ENCODE measurements at regions of chr9 and their contacts with region 1.

Region 1: GRCh38 chr9:89154651-89155336 is 23.8 kb downstream of the SHC3 start:
- DNase-seq: peak; percentile 85
- H3K4me3 ChIP-seq: no peak overlapping the region
- H3K27ac ChIP-seq: peak overlapping the region; percentile 96
- H3K4me1 ChIP-seq: peaks cover 24% of the 10 kb centered on the region
- H3K27me3 ChIP-seq: no peaks in the 10 kb centered on the region
- CTCF ChIP-seq: no peak
- POLR2A ChIP-seq: no peak

Region 2: DNA sequence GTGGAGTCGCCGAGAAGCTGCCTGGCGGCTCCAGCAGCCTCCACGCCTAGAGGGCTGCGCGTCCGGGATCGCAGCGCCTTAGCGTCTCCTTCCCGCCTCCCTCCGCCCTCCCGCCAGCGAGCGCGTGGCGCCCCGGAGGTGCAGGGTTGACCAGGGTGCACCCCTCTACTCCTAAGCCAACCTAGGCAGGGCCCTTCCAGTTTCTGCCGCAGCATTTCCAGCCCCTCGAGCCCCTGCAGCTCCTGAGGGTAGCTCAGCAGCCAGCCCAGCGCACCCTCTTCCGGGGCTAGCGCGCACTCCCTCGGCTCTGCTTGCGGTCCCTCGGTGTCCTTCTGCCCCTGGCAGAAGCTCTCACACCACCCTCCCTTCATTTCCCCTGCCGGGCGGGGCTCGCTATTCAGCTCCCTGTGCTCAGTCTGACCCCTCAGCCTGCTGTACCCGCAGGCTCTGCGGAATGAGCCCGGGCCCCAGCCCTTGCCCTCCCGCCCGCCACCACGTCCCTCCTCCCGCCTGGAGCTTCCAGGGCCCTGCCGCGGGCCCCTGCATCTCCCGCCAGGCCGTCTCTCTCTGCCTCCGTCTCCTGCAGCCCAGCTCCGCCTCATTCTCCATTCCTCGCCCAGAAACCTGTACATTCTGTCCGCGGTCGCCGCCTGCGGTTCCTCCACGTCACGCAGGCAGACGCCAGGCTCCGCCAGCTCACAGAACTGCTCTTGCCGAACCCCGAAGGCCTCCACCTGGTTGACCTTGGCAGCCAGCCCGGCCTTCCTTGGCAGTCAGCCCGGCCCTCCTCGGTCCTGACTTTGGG is 1078.3 kb before region 1 on chr9:
- CTCF ChIA-PET with region 1: no interaction called
- POLR2A ChIA-PET with region 1: no interaction called
- dilution Hi-C with region 1: no loop called
- intact Hi-C with region 1: loop called (anchors 5 kb)
- DNase-seq: peak; percentile 10
- H3K4me3 ChIP-seq: peak overlapping the region in 1 of 3 experiments; percentile 27
- H3K27ac ChIP-seq: no peak overlapping the region
- H3K4me1 ChIP-seq: peaks cover 3% of the 10 kb centered on the region
- H3K27me3 ChIP-seq: peaks cover 6 to 10% of the 10 kb centered on the region in 2 experiments
- CTCF ChIP-seq: peak in 1 of 2 donors; percentile 4
- POLR2A ChIP-seq: no peak

Region 3: DNA sequence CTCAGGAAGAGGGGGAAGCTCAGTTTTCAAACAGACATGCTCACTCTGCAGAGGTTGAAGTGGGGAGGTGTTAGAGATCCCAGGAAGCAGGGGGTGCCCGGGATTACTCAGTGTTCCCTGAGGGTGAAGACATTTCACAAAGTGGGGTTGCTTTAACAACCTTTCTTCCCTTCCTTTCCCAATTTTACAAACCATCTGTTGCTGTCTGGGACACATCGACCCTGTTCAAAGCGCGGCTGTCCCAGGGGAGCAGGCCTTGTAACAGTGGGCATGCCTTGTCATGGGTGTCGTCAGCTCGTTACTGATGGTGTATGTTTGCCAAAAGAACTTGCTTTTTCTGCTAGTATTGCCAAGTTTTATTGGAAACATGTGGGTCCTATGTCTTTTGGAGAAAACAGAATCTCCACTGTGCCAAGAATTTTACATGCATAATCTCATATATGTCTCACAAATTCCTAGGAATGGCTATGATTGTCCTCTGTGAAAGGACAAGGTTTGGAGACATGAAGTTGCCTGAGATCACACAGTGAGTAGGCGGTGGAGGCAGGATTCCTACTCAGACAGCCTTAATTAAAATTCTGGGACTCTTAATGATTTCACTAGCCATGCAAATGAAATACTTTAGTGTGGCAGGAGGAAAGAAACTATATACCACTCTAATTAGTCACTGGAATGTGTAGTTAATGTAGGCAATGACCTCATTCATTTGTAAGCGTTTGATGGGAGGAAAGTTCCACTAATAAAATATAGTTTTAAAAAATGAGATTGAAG is 421.0 kb before region 1 on chr9:
- CTCF ChIA-PET with region 1: no interaction called
- POLR2A ChIA-PET with region 1: no interaction called
- dilution Hi-C with region 1: no loop called
- intact Hi-C with region 1: loop called (anchors 10 kb)
- DNase-seq: peak; percentile 57
- H3K4me3 ChIP-seq: no peak overlapping the region
- H3K27ac ChIP-seq: peak overlapping the region; percentile 48
- H3K4me1 ChIP-seq: peaks cover 29% of the 10 kb centered on the region
- H3K27me3 ChIP-seq: no peaks in the 10 kb centered on the region
- CTCF ChIP-seq: no peak
- POLR2A ChIP-seq: no peak

Region 4: DNA sequence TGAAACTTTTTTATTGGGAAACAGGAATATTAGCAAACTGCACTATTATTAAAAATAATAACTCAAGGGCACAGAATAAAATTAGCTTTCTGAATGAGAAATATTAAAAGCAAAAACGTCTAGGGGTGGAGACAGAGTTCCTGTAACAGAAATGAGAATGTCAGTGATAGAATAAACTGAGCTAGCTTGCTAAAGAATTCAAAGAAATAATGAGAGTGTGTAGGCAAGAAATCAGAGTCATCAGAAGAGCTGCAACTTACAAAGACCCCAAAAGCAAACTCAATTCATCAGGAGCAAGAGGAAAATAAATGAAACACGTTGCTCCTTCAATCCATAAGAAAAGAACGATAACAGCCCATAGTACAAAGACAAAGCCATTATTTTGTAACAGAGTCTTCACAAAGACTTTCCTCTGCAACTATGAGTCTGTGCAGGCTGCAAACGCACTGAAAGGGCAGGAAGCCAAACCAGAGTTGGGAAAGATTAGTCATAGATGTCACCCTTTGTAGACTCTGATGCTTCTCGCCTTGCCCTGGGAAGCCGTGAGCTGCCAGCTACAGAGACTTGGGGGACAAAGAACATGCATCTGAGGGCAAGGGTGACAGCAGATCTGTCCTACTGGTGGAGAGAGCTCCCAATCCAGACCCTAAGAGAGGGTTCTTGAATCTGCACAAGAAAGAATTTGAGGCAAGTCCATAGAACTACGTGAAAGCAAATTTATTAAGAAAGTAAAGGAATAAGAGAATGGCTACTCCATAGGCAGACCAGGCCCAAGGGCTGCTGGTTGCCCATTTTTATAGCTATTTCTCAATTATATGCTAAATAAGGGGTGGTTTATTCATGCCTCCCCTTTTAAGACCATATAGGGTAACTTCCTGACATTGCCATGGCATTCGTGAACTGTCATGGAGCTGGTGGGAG is 17.0 kb before region 1 on chr9:
- CTCF ChIA-PET with region 1: interaction called, 17 read pairs
- POLR2A ChIA-PET with region 1: interaction called, 7 read pairs
- dilution Hi-C with region 1: no loop called
- intact Hi-C with region 1: no loop called
- DNase-seq: peak; percentile 91
- H3K4me3 ChIP-seq: no peak overlapping the region
- H3K27ac ChIP-seq: peak overlapping the region; percentile 78
- H3K4me1 ChIP-seq: peaks cover 21% of the 10 kb centered on the region
- H3K27me3 ChIP-seq: no peaks in the 10 kb centered on the region
- CTCF ChIP-seq: no peak
- POLR2A ChIP-seq: no peak

Region 5: GRCh38 chr9:89179895-89180667 is 25.3 kb after region 1 on chr9:
- CTCF ChIA-PET with region 1: interaction called, 7 read pairs
- POLR2A ChIA-PET with region 1: interaction called, 6 read pairs
- dilution Hi-C with region 1: no loop called
- intact Hi-C with region 1: loop called (anchors 1 kb)
- DNase-seq: peak; percentile 97
- H3K4me3 ChIP-seq: peak overlapping the region; percentile 2 to 60 (median 34)
- H3K27ac ChIP-seq: peak overlapping the region; percentile 83
- H3K4me1 ChIP-seq: peaks cover 31% of the 10 kb centered on the region
- H3K27me3 ChIP-seq: peaks cover 13 to 20% of the 10 kb centered on the region in 2 experiments
- CTCF ChIP-seq: no peak
- POLR2A ChIP-seq: peak; percentile 85

Region 6: GRCh38 chr9:89234205-89235067 is 79.6 kb after region 1 on chr9:
- CTCF ChIA-PET with region 1: no interaction called
- POLR2A ChIA-PET with region 1: no interaction called
- dilution Hi-C with region 1: no loop called
- intact Hi-C with region 1: no loop called
- DNase-seq: no peak
- H3K4me3 ChIP-seq: no peak overlapping the region
- H3K27ac ChIP-seq: no peak overlapping the region
- H3K4me1 ChIP-seq: no peaks in the 10 kb centered on the region
- H3K27me3 ChIP-seq: peaks cover 8 to 18% of the 10 kb centered on the region in 2 experiments
- CTCF ChIP-seq: no peak
- POLR2A ChIP-seq: no peak

Region 7: GRCh38 chr9:89310475-89311346 is 155.9 kb after region 1 on chr9 and contains the start of gene CKS2:
- CTCF ChIA-PET with region 1: no interaction called
- POLR2A ChIA-PET with region 1: interaction called, 3 read pairs
- dilution Hi-C with region 1: no loop called
- intact Hi-C with region 1: loop called (anchors 1 kb)
- DNase-seq: peak; percentile 100
- H3K4me3 ChIP-seq: peak within 1 kb of the TSS; percentile 70 to 98 (median 97)
- H3K27ac ChIP-seq: peak within 1 kb of the TSS; percentile 98
- H3K4me1 ChIP-seq: peaks cover 28% of the 10 kb centered on the region
- H3K27me3 ChIP-seq: no peaks in the 10 kb centered on the region
- CTCF ChIP-seq: no peak
- POLR2A ChIP-seq: peak; percentile 95
- total RNA-seq, gene CKS2: 149 and 153 TPM in 2 replicates

Region 8: DNA sequence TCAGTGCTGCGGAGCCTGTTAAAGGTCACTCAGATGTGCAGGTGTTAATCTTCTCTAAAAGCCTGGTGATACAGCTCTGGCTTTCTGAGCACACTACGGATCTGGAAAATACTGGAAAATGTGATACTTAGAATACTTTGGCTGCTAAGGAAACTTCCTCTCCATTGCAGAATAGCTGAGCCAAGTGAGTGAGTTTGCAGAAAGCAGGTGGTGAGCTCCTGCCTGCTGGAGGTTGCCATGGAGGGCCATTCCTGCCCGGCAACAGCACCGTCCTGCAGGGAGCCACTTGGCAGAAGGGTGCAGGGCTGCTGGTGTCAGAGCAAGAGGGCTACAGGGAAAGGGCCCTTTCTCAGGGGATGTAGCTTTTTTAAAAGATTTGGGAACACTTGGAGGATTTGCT is 204.2 kb after region 1 on chr9:
- CTCF ChIA-PET with region 1: no interaction called
- POLR2A ChIA-PET with region 1: no interaction called
- dilution Hi-C with region 1: no loop called
- intact Hi-C with region 1: no loop called
- DNase-seq: peak; percentile 28
- H3K4me3 ChIP-seq: no peak overlapping the region
- H3K27ac ChIP-seq: no peak overlapping the region
- H3K4me1 ChIP-seq: peaks cover 7% of the 10 kb centered on the region
- H3K27me3 ChIP-seq: no peaks in the 10 kb centered on the region
- CTCF ChIP-seq: no peak
- POLR2A ChIP-seq: no peak